ENCODE measurements at regions of chr20 and their contacts with region 1.

Region 1: GRCh38 chr20:45450097-45450818 is 19.3 kb upstream of the WFDC2 start:
- DNase-seq: peak; percentile 79
- H3K4me3 ChIP-seq: no peak overlapping the region
- H3K27ac ChIP-seq: no peak overlapping the region
- H3K4me1 ChIP-seq: peaks cover 11% of the 10 kb centered on the region
- CTCF ChIP-seq: peak; percentile 94

Region 2: DNA sequence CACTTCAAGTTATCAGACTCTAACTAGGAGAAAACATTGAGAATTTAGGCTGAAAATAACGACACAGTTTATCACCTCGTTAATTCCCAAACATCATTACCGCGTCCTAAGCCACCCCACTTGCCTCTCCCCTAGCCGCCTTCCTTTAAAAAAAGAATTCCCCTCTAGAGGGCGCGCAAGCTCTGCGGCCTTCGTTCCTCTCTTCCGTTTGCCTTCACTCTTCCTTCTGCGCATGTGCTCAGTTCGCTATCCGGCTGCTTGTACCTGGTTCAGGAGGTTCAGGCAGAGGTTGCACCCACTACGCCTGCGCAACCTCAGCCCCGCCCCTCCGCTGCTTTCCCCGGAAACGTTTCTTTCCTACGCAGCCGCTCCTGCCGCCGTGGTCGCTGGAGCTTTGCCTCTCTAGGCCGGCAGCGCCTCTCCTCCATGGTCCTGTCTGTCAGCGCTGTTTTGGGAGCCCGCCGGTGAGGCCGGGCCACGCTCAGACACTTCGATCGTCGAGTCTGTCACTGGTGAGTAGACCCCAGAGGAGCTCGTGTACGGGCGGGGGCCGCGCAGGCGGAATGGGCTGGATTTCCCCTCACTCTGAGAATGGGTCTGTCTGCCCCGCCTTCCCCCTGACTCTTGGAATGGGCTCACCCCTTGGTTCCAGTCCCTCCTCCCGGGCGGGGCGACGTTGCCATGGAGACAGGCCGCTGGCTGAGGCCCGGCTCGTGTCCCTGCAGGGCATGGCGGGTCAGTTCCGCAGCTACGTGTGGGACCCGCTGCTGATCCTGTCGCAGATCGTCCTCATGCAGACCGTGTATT is 87.3 kb before region 1 on chr20 and contains the start of gene SYS1:
- CTCF ChIA-PET with region 1: no interaction called
- POLR2A ChIA-PET with region 1: no interaction called
- intact Hi-C with region 1: loop called (anchors 1 kb)
- DNase-seq: peak; percentile 98
- H3K4me3 ChIP-seq: peak within 1 kb of the TSS; percentile 76
- H3K27ac ChIP-seq: peak within 1 kb of the TSS; percentile 54
- H3K4me1 ChIP-seq: peaks cover 43% of the 10 kb centered on the region
- CTCF ChIP-seq: peak; percentile 89
- total RNA-seq, gene SYS1: 22.3 and 37.6 TPM in 2 replicates